PC-3 (cell line): ENCODE measurements at regions of chr15 and their contacts with region 1.

Region 1: DNA sequence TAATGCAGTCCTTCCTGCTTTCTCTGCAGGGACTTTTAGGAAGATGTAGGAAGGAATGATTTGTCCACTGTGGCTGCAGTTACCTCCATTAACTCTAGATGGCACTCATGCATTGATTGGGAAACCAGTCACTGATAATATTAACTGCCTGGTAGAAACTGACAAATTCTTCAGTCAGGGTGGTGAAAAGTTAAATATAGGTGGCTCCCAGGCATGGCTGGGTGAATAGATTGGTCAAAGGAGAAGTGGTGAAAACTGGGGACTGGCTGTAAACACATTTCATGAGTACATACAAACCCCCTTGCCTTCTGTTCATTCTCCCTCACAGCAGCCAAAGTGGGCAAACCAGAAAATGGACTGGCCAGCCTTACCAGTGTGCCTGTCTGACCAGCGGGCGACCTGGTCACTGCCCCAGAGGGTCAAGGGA is 333.4 kb downstream of the THSD4 start:
- DNase-seq: peak; percentile 90
- ATAC-seq: no peak
- H3K4me3 ChIP-seq: peak overlapping the region; percentile 52; the same call in 1 of the 2 replicates
- H3K27ac ChIP-seq: peak overlapping the region; percentile 99
- H3K4me1 ChIP-seq: peaks cover 52% of the 10 kb centered on the region
- H3K27me3 ChIP-seq: no peaks in the 10 kb centered on the region
- CTCF ChIP-seq: peak; percentile 87

Region 2: DNA sequence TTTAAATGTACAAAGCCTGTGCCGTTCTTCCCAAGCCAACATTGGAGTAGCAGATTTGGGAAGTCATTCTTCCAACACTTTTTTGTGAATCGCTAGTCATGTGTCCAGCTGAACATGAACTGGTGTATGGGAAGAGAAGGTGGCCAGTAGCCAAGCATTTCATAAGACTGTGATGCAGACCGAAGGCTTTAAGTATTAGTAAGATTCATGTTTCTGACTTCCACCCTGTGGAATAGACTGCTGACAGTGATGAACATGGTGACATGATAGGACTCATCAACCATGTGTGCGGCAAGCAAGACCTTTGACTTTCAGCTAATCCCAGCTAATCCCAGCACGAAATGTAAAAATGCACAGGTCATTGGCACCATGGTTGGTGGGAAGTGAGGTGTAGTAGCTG is 381.7 kb before region 1 on chr15:
- CTCF ChIA-PET with region 1: no interaction called
- POLR2A ChIA-PET with region 1: no interaction called
- intact Hi-C with region 1: no loop called
- DNase-seq: no peak
- ATAC-seq: no peak
- H3K4me3 ChIP-seq: no peak overlapping the region
- H3K27ac ChIP-seq: no peak overlapping the region
- H3K4me1 ChIP-seq: peaks cover 21% of the 10 kb centered on the region
- H3K27me3 ChIP-seq: no peaks in the 10 kb centered on the region
- CTCF ChIP-seq: no peak

Region 3: DNA sequence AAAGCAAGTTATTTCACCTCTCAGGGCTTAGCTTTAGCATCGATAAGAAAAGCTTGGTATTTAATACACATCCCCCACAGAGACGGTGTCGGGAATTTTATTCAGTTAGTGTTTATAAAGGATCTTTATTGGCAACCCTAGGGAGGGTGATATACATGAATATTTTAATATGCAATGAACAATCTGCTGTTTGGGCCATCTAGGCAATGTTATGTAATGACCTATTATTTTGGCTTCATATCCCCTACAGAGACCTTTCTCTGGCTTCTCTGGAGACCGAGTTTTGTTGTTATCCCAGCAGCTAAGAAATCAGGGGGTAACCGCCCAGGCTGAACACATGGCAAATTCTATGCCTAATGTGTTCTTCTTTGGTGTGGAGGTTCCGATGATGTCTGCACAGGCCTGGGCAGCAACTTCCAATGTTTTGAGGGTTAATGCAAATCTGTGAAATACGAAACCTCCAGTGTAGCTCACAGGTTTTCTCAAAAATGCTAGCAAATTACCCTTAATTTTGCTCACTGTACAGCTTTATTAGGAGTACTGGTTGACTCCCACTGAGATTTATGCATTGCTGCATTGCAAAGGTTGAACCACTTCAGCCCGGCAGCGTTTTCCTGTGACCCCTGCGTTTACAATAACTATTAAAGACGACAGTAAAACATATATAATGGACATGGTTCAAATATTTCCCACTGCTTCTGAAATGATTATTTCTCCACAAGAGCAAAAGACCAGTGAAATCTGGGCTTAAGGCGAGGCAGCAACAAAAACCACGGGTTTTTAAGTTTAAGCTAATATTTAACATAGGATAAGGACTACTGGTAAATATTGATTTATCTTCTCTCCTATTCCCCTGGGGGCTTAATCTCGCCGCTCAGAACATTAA is 63.3 kb after region 1 on chr15:
- CTCF ChIA-PET with region 1: no interaction called
- POLR2A ChIA-PET with region 1: no interaction called
- intact Hi-C with region 1: loop called (anchors 5 kb)
- DNase-seq: peak; percentile 22
- ATAC-seq: peak; percentile 79
- H3K4me3 ChIP-seq: no peak overlapping the region
- H3K27ac ChIP-seq: no peak overlapping the region
- H3K4me1 ChIP-seq: peaks cover 14% of the 10 kb centered on the region
- H3K27me3 ChIP-seq: no peaks in the 10 kb centered on the region
- CTCF ChIP-seq: no peak

Region 4: DNA sequence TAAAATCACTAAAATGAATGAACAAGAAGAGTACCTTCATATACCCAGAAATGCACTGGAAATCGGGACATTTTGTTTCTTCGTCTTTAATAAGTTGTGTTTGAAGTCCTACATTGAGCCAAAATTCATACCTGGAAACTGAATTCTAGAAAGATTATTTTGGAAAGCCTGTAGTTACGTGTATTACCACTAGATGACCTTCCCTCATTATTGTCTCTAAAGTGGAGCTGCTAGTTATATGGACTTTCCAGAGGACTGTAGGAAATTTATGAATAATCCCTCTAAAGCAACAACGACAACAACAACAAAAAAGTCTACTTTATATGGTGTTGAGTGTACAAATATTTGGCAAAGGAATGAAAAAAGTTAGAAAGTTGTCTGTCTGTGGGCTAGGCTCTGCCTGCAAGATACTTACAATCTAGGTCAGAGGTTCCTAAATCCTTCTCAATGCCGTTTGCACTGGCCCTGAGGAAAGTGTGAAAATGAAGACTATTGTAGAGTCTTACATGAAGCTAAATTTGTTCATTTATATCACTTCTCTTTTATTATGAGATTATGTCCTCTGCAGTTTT is 126.9 kb after region 1 on chr15:
- CTCF ChIA-PET with region 1: no interaction called
- POLR2A ChIA-PET with region 1: no interaction called
- intact Hi-C with region 1: loop called (anchors 5 kb)
- DNase-seq: peak; percentile 49
- ATAC-seq: no peak
- H3K4me3 ChIP-seq: no peak overlapping the region
- H3K27ac ChIP-seq: no peak overlapping the region
- H3K4me1 ChIP-seq: peaks cover 27% of the 10 kb centered on the region
- H3K27me3 ChIP-seq: no peaks in the 10 kb centered on the region
- CTCF ChIP-seq: peak; percentile 79

Region 5: GRCh38 chr15:71730277-71731144 is 281.8 kb after region 1 on chr15:
- CTCF ChIA-PET with region 1: no interaction called
- POLR2A ChIA-PET with region 1: no interaction called
- intact Hi-C with region 1: loop called (anchors 5 kb)
- DNase-seq: peak; percentile 76
- ATAC-seq: peak; percentile 88
- H3K4me3 ChIP-seq: no peak overlapping the region
- H3K27ac ChIP-seq: no peak overlapping the region
- H3K4me1 ChIP-seq: peaks cover 3% of the 10 kb centered on the region; the same call in 1 of the 2 replicates
- H3K27me3 ChIP-seq: no peaks in the 10 kb centered on the region
- CTCF ChIP-seq: peak; percentile 88